Activated CD4-positive, alpha-beta memory T cell treated with anti-CD3 and anti-CD28 coated beads for 36 hours (primary cell): ENCODE measurements at regions of chr12 and their contacts with region 1.

Region 1: DNA sequence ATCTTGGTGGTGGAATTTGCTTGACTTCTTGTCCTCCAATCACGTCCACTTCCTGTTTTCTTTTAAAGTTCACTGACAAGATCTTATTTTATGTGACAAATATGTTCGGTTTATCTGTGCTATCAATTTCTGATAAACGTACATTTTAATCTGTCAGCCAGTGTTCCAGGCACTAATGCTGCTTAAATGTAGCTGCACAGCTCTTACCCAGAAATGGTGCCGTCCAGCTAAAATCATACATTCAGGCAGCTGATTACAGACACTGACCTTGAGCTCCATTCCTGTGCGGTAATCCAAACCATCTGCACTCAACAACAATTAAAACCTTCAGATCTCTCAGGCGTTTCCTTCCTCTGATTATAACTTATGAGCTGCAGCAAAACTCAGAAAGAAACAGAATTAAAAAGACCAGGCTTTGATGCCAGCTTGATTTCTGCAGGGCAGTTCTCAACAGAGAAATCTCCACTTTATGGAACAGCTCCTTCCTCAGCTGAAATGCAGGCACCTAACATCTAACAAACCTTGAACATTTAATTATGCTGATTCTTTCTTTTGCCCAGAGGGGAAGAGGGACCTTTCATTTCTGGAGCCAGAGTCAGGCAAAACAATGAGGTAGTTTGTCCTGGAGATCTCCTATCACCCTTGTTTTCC is 26.4 kb upstream of the RASSF3 start:
- DNase-seq: no peak
- H3K4me3 Mint-ChIP-seq: peak overlapping the region; percentile 45
- H3K27ac Mint-ChIP-seq: peak overlapping the region; percentile 63
- H3K4me1 Mint-ChIP-seq: peaks cover 28% of the 10 kb centered on the region
- H3K27me3 Mint-ChIP-seq: no peaks in the 10 kb centered on the region

Region 2: DNA sequence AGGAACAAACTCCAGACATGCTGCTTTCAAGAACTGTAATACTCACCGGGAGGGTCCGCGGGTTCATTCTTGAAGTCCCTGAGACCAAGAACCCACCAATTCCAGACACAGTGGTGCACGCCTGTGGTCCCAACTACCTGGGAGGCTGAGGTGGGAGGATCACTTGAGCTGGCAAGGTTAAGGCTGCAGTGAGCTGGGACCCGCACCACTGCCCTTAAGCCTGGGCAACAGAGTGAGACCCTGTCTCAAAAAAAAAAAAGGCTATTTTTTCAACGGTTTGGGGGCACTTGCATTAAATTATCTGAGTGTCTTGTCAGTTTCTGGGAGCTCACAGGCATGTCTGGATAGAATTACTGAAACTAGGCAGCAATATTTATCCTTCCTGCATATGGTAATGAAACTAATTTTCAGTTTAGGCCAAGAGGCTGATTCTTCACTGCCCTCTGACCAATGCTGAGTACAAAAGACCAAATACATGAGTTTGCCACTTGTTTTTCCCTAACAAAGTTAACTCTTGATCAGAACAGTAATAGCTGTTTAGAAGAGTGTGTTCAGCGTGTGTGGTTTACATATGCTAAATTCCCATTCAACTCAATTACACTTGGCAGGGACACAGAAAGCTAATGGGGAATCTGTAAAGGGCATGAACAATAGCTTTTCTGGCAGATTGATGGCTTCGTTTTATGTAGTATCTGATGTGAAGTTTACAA is 39.4 kb before region 1 on chr12:
- CTCF ChIA-PET with region 1: interaction called, 10 read pairs
- POLR2A ChIA-PET with region 1: no interaction called
- intact Hi-C with region 1: loop called (anchors 5 kb)
- DNase-seq: no peak
- H3K4me3 Mint-ChIP-seq: no peak overlapping the region
- H3K27ac Mint-ChIP-seq: no peak overlapping the region
- H3K4me1 Mint-ChIP-seq: peaks cover 3% of the 10 kb centered on the region
- H3K27me3 Mint-ChIP-seq: peaks cover 11% of the 10 kb centered on the region